ENCODE measurements at regions of chr5 and their contacts with region 1.

Region 1: GRCh38 chr5:138552700-138553099 is 9.7 kb upstream of the ETF1 start:
- DNase-seq: no peak
- ATAC-seq: no peak
- H3K4me3 Mint-ChIP-seq: no peak overlapping the region
- H3K27ac Mint-ChIP-seq: no peak overlapping the region
- H3K4me1 Mint-ChIP-seq: peaks cover 12% of the 10 kb centered on the region
- H3K27me3 Mint-ChIP-seq: no peaks in the 10 kb centered on the region
- CTCF ChIP-seq: no peak

Region 2: DNA sequence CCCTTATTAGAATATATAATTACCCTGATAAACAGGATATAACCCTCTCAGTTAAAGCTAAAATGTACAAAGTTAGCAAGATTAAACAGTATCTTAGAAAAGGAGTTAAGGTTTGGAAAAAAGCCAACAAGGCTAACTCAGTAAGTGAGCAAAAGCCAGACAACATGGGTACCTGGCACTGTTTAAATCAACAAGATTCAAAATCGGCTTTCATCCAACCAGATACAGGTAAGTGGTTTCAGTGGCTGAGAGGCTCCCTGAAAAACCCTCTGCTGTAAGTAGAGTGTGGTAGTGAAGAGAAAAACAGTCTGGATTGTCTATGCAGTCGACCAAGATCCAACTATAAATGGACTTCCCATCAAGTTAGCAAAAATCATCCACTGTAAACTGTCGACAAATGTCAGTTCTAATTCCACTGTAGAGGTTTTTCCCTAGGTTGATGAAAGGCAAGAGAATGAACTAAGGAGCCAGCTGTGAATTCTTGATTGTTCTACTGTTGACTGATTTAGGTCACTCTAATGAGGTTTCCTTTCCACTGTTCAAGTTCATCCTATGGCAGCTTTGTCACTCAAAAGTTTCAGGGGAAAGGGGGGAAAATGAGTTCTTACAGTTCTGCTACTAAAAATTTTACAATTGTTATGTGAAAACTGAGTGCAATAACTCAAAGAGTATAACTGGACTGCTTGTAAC is 37.0 kb before region 1 on chr5:
- CTCF ChIA-PET with region 1: no interaction called
- POLR2A ChIA-PET with region 1: no interaction called
- intact Hi-C with region 1: no loop called
- DNase-seq: no peak
- ATAC-seq: no peak
- H3K4me3 Mint-ChIP-seq: no peak overlapping the region
- H3K27ac Mint-ChIP-seq: no peak overlapping the region
- H3K4me1 Mint-ChIP-seq: peaks cover 6% of the 10 kb centered on the region
- H3K27me3 Mint-ChIP-seq: no peaks in the 10 kb centered on the region
- CTCF ChIP-seq: no peak

Region 3: DNA sequence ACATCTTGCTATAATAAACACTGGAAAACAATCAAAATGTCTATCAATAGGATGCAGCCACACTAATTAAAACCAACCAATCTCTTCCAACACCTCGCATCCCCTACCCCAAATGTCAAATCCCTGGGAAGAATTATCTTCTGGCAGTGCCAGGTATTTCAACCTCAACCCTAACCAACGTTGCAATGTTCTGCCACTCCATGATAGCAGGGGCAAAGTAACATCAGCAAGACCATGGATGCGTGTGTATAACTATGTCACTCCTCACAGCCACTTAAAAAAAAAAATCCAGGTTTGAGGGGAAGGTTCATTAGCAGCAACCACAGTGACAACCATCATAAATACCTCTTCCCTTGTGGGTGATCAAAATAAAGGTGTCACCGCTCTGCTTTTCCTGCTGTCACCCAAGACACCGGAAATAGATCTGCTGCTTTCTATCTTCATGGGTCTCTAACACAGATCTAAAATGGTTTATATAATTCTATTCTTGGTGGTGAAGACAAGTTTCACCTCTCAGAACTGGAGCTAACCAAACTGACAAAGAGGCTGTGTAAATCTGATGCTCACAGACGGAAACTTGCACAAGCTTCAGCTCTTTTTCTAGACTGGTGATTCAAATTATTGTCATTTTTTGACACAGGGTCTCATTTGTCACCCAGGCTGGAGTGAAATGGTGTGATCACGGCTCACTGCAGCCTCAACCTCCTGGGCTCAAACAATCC is 12.6 kb after region 1 on chr5:
- CTCF ChIA-PET with region 1: no interaction called
- POLR2A ChIA-PET with region 1: interaction called, 12 read pairs
- intact Hi-C with region 1: no loop called
- DNase-seq: no peak
- ATAC-seq: no peak
- H3K4me3 Mint-ChIP-seq: no peak overlapping the region
- H3K27ac Mint-ChIP-seq: no peak overlapping the region
- H3K4me1 Mint-ChIP-seq: peaks cover 5% of the 10 kb centered on the region
- H3K27me3 Mint-ChIP-seq: no peaks in the 10 kb centered on the region
- CTCF ChIP-seq: no peak